Activated B cell treated with CpG ODN at 0.5 μM for 24 hours (primary cell): ENCODE measurements at regions of chr11 and their contacts with region 1.

Region 1: DNA sequence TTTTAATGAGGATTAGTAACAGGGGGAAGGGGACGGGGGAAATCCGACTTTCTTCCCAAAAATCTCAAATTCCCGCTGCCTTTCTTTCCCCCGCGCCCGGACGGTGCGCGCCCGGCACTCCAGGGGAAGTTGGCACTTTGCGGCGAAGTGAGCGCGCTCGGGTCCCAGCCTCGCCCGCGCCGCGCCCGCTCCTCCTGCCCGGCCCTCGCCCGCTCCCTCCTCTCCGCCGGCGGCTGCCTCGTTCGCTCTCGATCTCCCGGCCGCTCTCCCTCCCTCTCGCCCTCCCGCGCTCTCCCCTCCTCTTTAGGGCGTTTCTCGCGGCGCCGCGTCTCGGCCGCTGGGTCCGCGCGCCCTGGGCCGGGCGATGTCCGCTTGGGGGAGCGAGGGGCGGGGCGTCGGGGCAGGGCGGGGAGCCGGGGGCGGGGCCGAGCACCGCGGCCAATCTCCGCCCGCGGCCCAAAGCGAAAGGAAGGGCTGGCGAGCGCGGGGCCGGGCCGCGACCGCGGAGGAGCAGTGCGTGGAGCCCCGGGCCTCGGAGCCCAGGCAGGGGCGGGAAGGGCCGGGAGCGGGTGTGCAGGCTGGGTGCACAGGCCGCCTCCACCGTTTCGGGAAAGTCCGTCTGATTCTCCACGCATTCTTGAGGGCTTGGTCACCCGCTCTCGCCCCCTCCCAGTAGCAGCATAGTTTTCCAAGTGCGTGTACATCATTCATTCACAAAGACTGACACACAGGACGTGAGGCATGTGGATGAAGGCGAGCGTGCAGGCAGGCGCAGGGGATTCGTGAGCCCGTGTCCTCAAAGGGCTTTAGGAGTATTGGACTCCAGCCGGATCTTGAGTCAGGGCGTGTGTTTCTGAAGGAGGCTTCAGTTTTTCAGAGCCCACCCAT is 65.1 kb downstream of the ETS1 start:
- DNase-seq: peak; percentile 88
- ATAC-seq: peak; percentile 89
- H3K4me3 Mint-ChIP-seq: peak overlapping the region; percentile 99
- H3K27ac Mint-ChIP-seq: peak overlapping the region; percentile 97
- H3K4me1 Mint-ChIP-seq: peaks cover 56% of the 10 kb centered on the region
- H3K27me3 Mint-ChIP-seq: no peaks in the 10 kb centered on the region
- CTCF ChIP-seq: no peak

Region 2: DNA sequence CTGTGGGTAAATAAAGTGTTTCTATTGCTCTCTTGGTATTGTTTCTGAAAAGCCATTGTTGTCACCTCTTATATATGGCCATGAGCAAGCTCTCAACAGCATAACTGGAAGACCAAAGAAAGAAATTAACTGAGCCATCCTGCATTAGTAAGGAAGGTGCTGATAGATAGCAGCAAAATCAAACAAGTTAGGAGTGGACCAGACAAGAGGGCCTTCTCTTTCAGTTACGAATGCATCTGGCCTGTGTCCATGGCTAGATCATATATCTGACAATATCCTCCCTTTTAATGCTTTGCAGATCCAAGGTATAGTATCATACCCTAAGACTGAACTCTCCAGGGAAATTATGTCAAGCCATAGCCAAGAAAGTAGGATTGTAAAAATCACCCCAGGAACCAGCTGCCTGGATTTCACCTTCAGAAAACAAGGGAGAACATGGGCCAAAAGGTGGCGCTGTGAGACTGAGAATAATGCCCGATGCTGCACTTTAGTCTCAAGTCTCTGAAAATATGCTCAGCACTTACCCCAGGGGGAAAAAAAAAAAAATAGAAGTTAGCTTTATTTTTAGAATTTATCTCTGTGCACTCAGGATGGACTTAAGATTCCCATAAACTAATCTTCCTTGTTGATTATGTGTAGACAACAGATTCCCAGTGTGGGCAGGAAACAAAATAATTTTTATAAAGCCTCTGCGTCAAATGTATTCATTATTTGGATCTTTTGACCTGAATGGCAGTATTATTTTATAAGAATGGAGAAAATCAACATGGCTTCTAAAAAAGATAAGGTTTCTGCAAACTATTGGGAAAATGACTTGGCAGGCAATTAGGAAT is 350.0 kb before region 1 on chr11:
- CTCF ChIA-PET with region 1: no interaction called
- POLR2A ChIA-PET with region 1: no interaction called
- intact Hi-C with region 1: loop called (anchors 5 kb)
- DNase-seq: peak; percentile 65
- ATAC-seq: peak; percentile 79
- H3K4me3 Mint-ChIP-seq: no peak overlapping the region
- H3K27ac Mint-ChIP-seq: no peak overlapping the region
- H3K4me1 Mint-ChIP-seq: peaks cover 5% of the 10 kb centered on the region
- H3K27me3 Mint-ChIP-seq: no peaks in the 10 kb centered on the region
- CTCF ChIP-seq: no peak

Region 3: GRCh38 chr11:128302425-128303186 is 219.7 kb before region 1 on chr11:
- CTCF ChIA-PET with region 1: no interaction called
- POLR2A ChIA-PET with region 1: interaction called, 10 read pairs
- intact Hi-C with region 1: no loop called
- DNase-seq: no peak
- ATAC-seq: peak; percentile 89
- H3K4me3 Mint-ChIP-seq: peak overlapping the region; percentile 21
- H3K27ac Mint-ChIP-seq: peak overlapping the region; percentile 81
- H3K4me1 Mint-ChIP-seq: peaks cover 73% of the 10 kb centered on the region
- H3K27me3 Mint-ChIP-seq: no peaks in the 10 kb centered on the region
- CTCF ChIP-seq: no peak

Region 4: DNA sequence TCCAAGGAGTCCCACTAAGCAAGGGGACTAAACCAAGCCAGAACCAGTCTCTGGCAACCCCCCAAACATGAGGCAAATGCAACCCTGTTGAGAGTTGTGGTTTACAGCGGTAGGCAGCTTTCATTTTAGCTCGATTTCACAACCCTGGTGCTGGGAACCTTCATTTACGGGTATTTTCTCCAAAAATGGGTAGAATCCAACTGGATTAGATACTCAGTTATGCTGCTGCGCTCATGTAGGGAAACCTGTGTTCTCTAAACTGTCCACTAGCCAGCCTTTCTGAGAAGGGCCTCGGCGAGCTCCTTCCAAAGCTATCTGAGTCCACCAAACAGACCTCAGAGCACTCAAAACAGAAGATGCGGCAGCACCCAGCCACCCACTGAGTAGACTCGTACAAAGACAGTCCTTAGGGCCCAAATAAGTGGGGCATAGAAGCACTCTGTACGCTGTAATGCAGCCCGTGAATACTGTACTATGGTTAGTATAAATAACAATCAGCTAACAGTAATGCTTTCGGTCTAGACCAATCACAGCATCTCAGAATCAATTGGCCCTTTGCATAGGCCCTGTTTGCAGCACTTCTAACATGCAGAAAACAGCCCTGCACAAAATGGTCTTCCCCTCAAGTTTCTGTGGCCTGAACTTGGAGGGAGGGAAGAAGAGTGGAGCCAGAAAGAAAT is 39.6 kb before region 1 on chr11:
- CTCF ChIA-PET with region 1: interaction called, 3 read pairs
- POLR2A ChIA-PET with region 1: interaction called, 42 read pairs
- intact Hi-C with region 1: no loop called
- DNase-seq: no peak
- ATAC-seq: peak; percentile 18
- H3K4me3 Mint-ChIP-seq: peak overlapping the region; percentile 67
- H3K27ac Mint-ChIP-seq: peak overlapping the region; percentile 89
- H3K4me1 Mint-ChIP-seq: peaks cover 95% of the 10 kb centered on the region
- H3K27me3 Mint-ChIP-seq: no peaks in the 10 kb centered on the region
- CTCF ChIP-seq: no peak

Region 5: GRCh38 chr11:128506999-128507611 is 15.2 kb before region 1 on chr11:
- CTCF ChIA-PET with region 1: interaction called, 5 read pairs
- POLR2A ChIA-PET with region 1: interaction called, 111 read pairs
- intact Hi-C with region 1: loop called (anchors 1 kb)
- DNase-seq: no peak
- ATAC-seq: peak; percentile 64
- H3K4me3 Mint-ChIP-seq: peak overlapping the region; percentile 74
- H3K27ac Mint-ChIP-seq: peak overlapping the region; percentile 77
- H3K4me1 Mint-ChIP-seq: peaks cover 100% of the 10 kb centered on the region
- H3K27me3 Mint-ChIP-seq: no peaks in the 10 kb centered on the region
- CTCF ChIP-seq: no peak

Region 6: GRCh38 chr11:128603752-128604414 is 81.6 kb after region 1 on chr11:
- CTCF ChIA-PET with region 1: interaction called, 11 read pairs
- POLR2A ChIA-PET with region 1: interaction called, 101 read pairs
- intact Hi-C with region 1: no loop called
- DNase-seq: no peak
- ATAC-seq: peak; percentile 63
- H3K4me3 Mint-ChIP-seq: no peak overlapping the region
- H3K27ac Mint-ChIP-seq: peak overlapping the region; percentile 78
- H3K4me1 Mint-ChIP-seq: peaks cover 70% of the 10 kb centered on the region
- H3K27me3 Mint-ChIP-seq: no peaks in the 10 kb centered on the region
- CTCF ChIP-seq: no peak

Region 7: DNA sequence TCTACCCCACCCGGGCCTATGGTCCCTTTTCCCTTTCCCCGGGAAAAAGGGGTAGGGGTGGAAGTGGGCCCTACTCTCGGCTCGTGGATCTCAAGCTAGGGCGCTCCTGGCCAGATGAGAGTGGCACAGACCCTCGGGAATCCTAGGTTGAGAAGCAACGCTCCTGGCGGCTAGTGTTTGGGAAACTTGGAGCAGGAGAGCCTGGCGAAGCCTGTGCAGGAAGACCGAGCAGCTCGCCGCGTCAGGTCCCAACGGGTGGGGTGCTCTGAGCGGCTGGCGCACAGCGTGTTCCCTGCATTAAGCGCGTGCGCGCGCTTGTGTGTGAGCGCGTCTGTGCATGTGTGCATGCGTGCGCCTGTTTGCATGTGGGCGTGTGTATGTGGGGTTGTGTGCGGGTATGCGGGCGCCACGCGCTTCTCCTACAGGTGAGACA is 164.5 kb after region 1 on chr11:
- CTCF ChIA-PET with region 1: no interaction called
- POLR2A ChIA-PET with region 1: interaction called, 11 read pairs
- intact Hi-C with region 1: no loop called
- DNase-seq: peak; percentile 41
- ATAC-seq: peak; percentile 63
- H3K4me3 Mint-ChIP-seq: peak overlapping the region; percentile 84
- H3K27ac Mint-ChIP-seq: no peak overlapping the region
- H3K4me1 Mint-ChIP-seq: peaks cover 45% of the 10 kb centered on the region
- H3K27me3 Mint-ChIP-seq: peaks cover 25% of the 10 kb centered on the region
- CTCF ChIP-seq: no peak